ENCODE measurements at regions of chr17 and their contacts with region 1.

Region 1: GRCh38 chr17:17206124-17206912 is at the start of gene PLD6:
- DNase-seq: peak; percentile 28
- ATAC-seq: peak; percentile 75
- H3K4me3 ChIP-seq: peak within 1 kb of the TSS; percentile 56 to 67
- H3K27ac ChIP-seq: peak within 1 kb of the TSS; percentile 63
- H3K4me1 ChIP-seq: peaks cover 8% of the 10 kb centered on the region
- H3K27me3 ChIP-seq: no peaks in the 10 kb centered on the region
- CTCF ChIP-seq: no peak
- total RNA-seq, gene PLD6: 4.2 TPM

Region 2: GRCh38 chr17:17258011-17258410 is 51.7 kb after region 1 on chr17:
- CTCF ChIA-PET with region 1: interaction called, 11 read pairs
- POLR2A ChIA-PET with region 1: no interaction called
- in situ Hi-C with region 1: no loop called
- intact Hi-C with region 1: no loop called
- DNase-seq: no peak
- ATAC-seq: no peak
- H3K4me3 ChIP-seq: no peak overlapping the region
- H3K27ac ChIP-seq: no peak overlapping the region
- H3K4me1 ChIP-seq: no peaks in the 10 kb centered on the region
- H3K27me3 ChIP-seq: no peaks in the 10 kb centered on the region
- CTCF ChIP-seq: no peak

Region 3: GRCh38 chr17:17484451-17484899 is 278.2 kb after region 1 on chr17:
- CTCF ChIA-PET with region 1: no interaction called
- POLR2A ChIA-PET with region 1: no interaction called
- in situ Hi-C with region 1: no loop called
- intact Hi-C with region 1: no loop called
- DNase-seq: no peak
- ATAC-seq: no peak
- H3K4me3 ChIP-seq: no peak overlapping the region
- H3K27ac ChIP-seq: no peak overlapping the region
- H3K4me1 ChIP-seq: no peaks in the 10 kb centered on the region
- H3K27me3 ChIP-seq: no peaks in the 10 kb centered on the region
- CTCF ChIP-seq: no peak

Region 4: DNA sequence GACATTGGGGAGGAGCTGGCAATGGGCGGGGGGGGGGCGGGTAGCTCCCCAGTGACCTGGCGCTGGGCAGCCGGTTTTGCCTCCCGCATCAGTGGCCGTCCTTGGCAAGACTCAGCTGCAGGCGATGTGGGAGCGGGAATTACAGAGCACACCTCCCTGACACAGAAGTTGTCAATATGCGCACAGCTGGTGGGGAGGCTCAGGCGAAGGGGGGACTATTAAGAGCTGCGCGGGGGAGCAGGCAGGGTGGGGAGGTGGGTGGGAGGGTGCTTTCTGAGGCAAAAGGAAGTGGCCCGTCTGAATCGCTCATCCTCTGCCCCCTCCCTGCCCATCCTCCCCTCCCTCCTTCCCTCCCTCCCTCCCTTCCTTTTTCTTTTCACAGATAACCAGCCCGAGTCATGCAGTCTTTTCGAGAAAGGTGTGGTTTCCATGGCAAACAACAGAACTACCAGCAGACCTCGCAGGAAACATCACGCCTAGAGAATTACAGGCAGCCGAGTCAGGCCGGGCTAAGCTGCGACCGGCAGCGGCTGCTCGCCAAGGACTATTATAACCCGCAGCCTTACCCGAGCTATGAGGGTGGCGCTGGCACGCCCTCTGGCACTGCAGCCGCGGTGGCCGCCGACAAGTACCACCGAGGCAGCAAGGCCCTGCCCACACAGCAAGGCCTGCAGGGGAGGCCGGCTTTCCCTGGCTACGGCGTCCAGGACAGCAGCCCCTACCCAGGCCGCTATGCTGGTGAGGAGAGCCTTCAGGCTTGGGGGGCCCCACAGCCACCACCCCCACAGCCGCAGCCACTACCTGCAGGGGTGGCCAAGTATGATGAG is 586.4 kb after region 1 on chr17:
- CTCF ChIA-PET with region 1: no interaction called
- POLR2A ChIA-PET with region 1: no interaction called
- in situ Hi-C with region 1: no loop called
- intact Hi-C with region 1: no loop called
- DNase-seq: no peak
- ATAC-seq: no peak
- H3K4me3 ChIP-seq: no peak overlapping the region
- H3K27ac ChIP-seq: no peak overlapping the region
- H3K4me1 ChIP-seq: peaks cover 19% of the 10 kb centered on the region
- H3K27me3 ChIP-seq: no peaks in the 10 kb centered on the region
- CTCF ChIP-seq: no peak